ENCODE measurements at regions of chr12 and their contacts with region 1.

Region 1: GRCh38 chr12:33427072-33427471 is 12.5 kb downstream of the SYT10 start:
- DNase-seq: peak; percentile 50
- H3K4me3 Mint-ChIP-seq: no peak overlapping the region
- H3K27ac Mint-ChIP-seq: no peak overlapping the region
- H3K4me1 Mint-ChIP-seq: peaks cover 34% of the 10 kb centered on the region
- H3K27me3 Mint-ChIP-seq: no peaks in the 10 kb centered on the region
- CTCF ChIP-seq: peak; percentile 47

Region 2: GRCh38 chr12:32877601-32878459 is 549.2 kb before region 1 on chr12:
- CTCF ChIA-PET with region 1: no interaction called
- intact Hi-C with region 1: no loop called
- DNase-seq: no peak
- H3K4me3 Mint-ChIP-seq: no peak overlapping the region
- H3K27ac Mint-ChIP-seq: no peak overlapping the region
- H3K4me1 Mint-ChIP-seq: peaks cover 27% of the 10 kb centered on the region
- H3K27me3 Mint-ChIP-seq: no peaks in the 10 kb centered on the region
- CTCF ChIP-seq: no peak

Region 3: GRCh38 chr12:33383503-33383902 is 43.6 kb before region 1 on chr12:
- CTCF ChIA-PET with region 1: no interaction called
- intact Hi-C with region 1: no loop called
- DNase-seq: no peak
- H3K4me3 Mint-ChIP-seq: no peak overlapping the region
- H3K27ac Mint-ChIP-seq: no peak overlapping the region
- H3K4me1 Mint-ChIP-seq: no peaks in the 10 kb centered on the region
- H3K27me3 Mint-ChIP-seq: no peaks in the 10 kb centered on the region
- CTCF ChIP-seq: no peak

Region 4: DNA sequence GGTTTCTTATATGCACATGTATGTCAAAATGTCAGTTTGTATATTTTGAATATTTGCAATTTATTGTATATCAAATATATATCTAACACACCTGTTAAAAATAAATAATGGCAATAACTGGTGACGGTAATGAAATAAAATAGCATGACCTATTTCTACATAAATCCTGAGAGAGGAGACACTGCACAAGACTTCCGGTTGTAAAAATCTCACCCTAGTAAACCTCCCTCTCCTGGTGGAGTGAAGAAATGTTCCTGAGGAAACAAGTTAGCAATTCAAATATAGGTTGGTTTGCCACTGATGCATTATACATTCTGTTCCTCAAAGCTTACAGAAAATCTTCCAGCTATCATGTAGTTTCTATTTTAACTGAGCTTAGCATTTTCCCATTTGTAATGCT is 178.7 kb after region 1 on chr12:
- CTCF ChIA-PET with region 1: interaction called, 3 read pairs
- intact Hi-C with region 1: loop called (anchors 1 kb)
- DNase-seq: peak; percentile 23
- H3K4me3 Mint-ChIP-seq: no peak overlapping the region
- H3K27ac Mint-ChIP-seq: no peak overlapping the region
- H3K4me1 Mint-ChIP-seq: no peaks in the 10 kb centered on the region
- H3K27me3 Mint-ChIP-seq: no peaks in the 10 kb centered on the region
- CTCF ChIP-seq: peak; percentile 29

Region 5: GRCh38 chr12:34022079-34022830 is 595.2 kb after region 1 on chr12 and contains the start of gene ALG10:
- CTCF ChIA-PET with region 1: no interaction called
- intact Hi-C with region 1: loop called (anchors 1 kb)
- DNase-seq: peak; percentile 96
- H3K4me3 Mint-ChIP-seq: peak within 1 kb of the TSS; percentile 88
- H3K27ac Mint-ChIP-seq: peak within 1 kb of the TSS; percentile 90
- H3K4me1 Mint-ChIP-seq: no peaks in the 10 kb centered on the region
- H3K27me3 Mint-ChIP-seq: no peaks in the 10 kb centered on the region
- CTCF ChIP-seq: peak; percentile 42
- total RNA-seq, gene ALG10: 16.4 and 17.4 TPM in 2 replicates